A673 (cell line): ENCODE measurements at regions of chr2 and their contacts with region 1.

Region 1: DNA sequence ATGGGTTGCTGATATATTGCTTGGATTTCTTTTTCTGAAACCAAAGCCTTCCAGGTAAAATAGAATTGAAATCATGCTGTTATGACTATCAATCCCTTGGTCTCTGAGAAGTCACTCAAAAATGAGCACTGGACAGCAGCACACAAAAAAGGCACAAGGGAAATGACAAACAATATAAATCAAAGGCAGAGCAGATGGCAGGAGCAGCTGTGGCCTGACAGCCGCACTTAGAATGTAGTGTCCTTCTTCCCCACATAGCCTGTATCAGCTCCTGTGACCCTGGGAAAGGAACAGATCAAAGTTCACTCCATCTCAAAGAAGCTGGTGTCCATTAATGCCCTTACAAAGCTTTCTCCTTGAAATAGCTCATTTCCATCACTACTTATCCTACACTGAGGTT is 326.7 kb downstream of the SUCLG1 start:
- DNase-seq: no peak
- H3K4me3 ChIP-seq: no peak overlapping the region
- H3K27ac ChIP-seq: no peak overlapping the region
- H3K4me1 ChIP-seq: no peaks in the 10 kb centered on the region
- H3K27me3 ChIP-seq: no peaks in the 10 kb centered on the region
- CTCF ChIP-seq: no peak

Region 2: GRCh38 chr2:83186105-83186760 is 946.1 kb before region 1 on chr2:
- CTCF ChIA-PET with region 1: no interaction called
- POLR2A ChIA-PET with region 1: no interaction called
- intact Hi-C with region 1: loop called (anchors 5 kb)
- DNase-seq: no peak
- H3K4me3 ChIP-seq: no peak overlapping the region
- H3K27ac ChIP-seq: no peak overlapping the region
- H3K4me1 ChIP-seq: no peaks in the 10 kb centered on the region
- H3K27me3 ChIP-seq: no peaks in the 10 kb centered on the region
- CTCF ChIP-seq: no peak